CD4-positive, alpha-beta T cell (primary cell): ENCODE measurements at regions of chr14 and their contacts with region 1.

Region 1: DNA sequence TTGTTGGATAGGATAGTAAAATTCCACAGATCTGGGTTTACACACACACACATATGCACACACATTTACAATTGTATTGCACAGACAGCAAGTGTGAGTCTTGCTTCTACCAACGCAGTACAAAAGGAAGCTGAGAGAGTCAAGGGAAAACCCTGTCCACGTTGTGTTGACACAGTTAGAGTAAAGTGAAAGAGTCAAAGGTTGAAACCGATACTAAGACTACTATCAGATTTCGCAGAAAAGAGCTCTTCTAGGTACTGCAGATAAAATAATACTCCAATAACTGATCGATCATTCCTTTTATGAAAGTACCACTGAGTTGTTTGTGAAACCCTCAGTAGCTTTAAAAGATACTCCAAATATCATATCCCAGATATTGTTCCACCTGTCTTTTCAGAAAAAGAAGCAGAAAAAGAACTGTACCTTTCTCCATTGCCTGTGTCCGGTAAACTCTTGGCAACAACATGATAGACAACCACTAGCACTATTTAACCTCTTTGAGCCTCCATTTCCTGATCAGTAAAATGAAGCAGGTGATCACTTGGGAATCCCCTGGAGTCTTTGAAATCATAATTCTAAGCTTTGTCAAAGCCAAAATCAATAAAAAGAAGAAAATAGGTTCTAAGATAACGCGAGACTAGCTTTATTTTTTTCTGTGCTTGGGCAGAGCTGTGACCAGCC is 224.6 kb upstream of the FOXN3 start:
- DNase-seq: peak in 4 of 14 experiments; percentile 27 to 73 (median 70)
- ATAC-seq: peak; percentile 83
- H3K4me3 ChIP-seq: peak overlapping the region; percentile 24
- H3K4me3 Mint-ChIP-seq: peak overlapping the region; percentile 72
- H3K27ac ChIP-seq: peak overlapping the region; percentile 25 to 80
- H3K27ac Mint-ChIP-seq: peak overlapping the region; percentile 94
- H3K4me1 ChIP-seq: peaks cover 13% of the 10 kb centered on the region
- H3K4me1 Mint-ChIP-seq: peaks cover 59% of the 10 kb centered on the region
- H3K27me3 ChIP-seq: no peaks in the 10 kb centered on the region
- H3K27me3 Mint-ChIP-seq: no peaks in the 10 kb centered on the region
- CTCF ChIP-seq: no peak

Region 2: GRCh38 chr14:88729159-88729558 is 912.5 kb before region 1 on chr14:
- CTCF ChIA-PET with region 1: no interaction called
- POLR2A ChIA-PET with region 1: no interaction called
- intact Hi-C with region 1: no loop called
- DNase-seq: no peak
- ATAC-seq: no peak
- H3K4me3 ChIP-seq: no peak overlapping the region
- H3K4me3 Mint-ChIP-seq: no peak overlapping the region
- H3K27ac ChIP-seq: no peak overlapping the region
- H3K27ac Mint-ChIP-seq: no peak overlapping the region
- H3K4me1 ChIP-seq: no peaks in the 10 kb centered on the region
- H3K4me1 Mint-ChIP-seq: no peaks in the 10 kb centered on the region
- H3K27me3 ChIP-seq: no peaks in the 10 kb centered on the region
- H3K27me3 Mint-ChIP-seq: no peaks in the 10 kb centered on the region
- CTCF ChIP-seq: no peak

Region 3: GRCh38 chr14:89406941-89407340 is 234.7 kb before region 1 on chr14:
- CTCF ChIA-PET with region 1: no interaction called
- POLR2A ChIA-PET with region 1: no interaction called
- intact Hi-C with region 1: no loop called
- DNase-seq: no peak
- ATAC-seq: no peak
- H3K4me3 ChIP-seq: no peak overlapping the region
- H3K4me3 Mint-ChIP-seq: peak overlapping the region; percentile 3
- H3K27ac ChIP-seq: no peak overlapping the region
- H3K27ac Mint-ChIP-seq: peak overlapping the region; percentile 56
- H3K4me1 ChIP-seq: peaks cover 42% of the 10 kb centered on the region
- H3K4me1 Mint-ChIP-seq: peaks cover 81% of the 10 kb centered on the region
- H3K27me3 ChIP-seq: no peaks in the 10 kb centered on the region
- H3K27me3 Mint-ChIP-seq: no peaks in the 10 kb centered on the region
- CTCF ChIP-seq: no peak

Region 4: DNA sequence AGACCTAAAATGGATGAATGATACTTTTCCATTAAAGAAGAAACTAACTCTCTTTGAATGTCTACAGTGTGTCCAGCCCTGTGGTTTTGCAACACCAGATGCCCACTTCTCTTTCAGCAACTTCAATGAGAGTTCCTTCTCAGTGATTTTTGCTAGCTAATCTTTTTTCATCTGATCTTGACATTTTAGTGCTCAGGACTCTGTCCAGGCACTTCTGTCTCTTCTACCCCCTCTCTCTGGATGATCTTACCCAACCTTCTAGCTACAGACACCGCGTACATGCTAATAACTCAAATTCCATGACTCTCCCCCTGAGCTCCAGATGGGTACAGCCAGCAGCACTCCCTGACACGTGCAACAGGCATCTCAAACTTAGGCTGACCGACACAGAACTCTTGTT is 63.5 kb before region 1 on chr14:
- CTCF ChIA-PET with region 1: no interaction called
- POLR2A ChIA-PET with region 1: no interaction called
- intact Hi-C with region 1: no loop called
- DNase-seq: no peak
- ATAC-seq: no peak
- H3K4me3 ChIP-seq: no peak overlapping the region
- H3K4me3 Mint-ChIP-seq: no peak overlapping the region
- H3K27ac ChIP-seq: no peak overlapping the region
- H3K27ac Mint-ChIP-seq: no peak overlapping the region
- H3K4me1 ChIP-seq: peaks cover 16% of the 10 kb centered on the region
- H3K4me1 Mint-ChIP-seq: peaks cover 73% of the 10 kb centered on the region
- H3K27me3 ChIP-seq: no peaks in the 10 kb centered on the region
- H3K27me3 Mint-ChIP-seq: no peaks in the 10 kb centered on the region
- CTCF ChIP-seq: no peak

Region 5: GRCh38 chr14:89681086-89682018 is 39.7 kb after region 1 on chr14:
- CTCF ChIA-PET with region 1: no interaction called
- POLR2A ChIA-PET with region 1: interaction called, 11 read pairs
- intact Hi-C with region 1: no loop called
- DNase-seq: peak in 5 of 14 experiments; percentile 9 to 71 (median 66)
- ATAC-seq: peak; percentile 76
- H3K4me3 ChIP-seq: peak overlapping the region; percentile 26
- H3K4me3 Mint-ChIP-seq: peak overlapping the region; percentile 81
- H3K27ac ChIP-seq: peak overlapping the region; percentile 53 to 62
- H3K27ac Mint-ChIP-seq: peak overlapping the region; percentile 92
- H3K4me1 ChIP-seq: peaks cover 30% of the 10 kb centered on the region
- H3K4me1 Mint-ChIP-seq: peaks cover 47% of the 10 kb centered on the region
- H3K27me3 ChIP-seq: no peaks in the 10 kb centered on the region
- H3K27me3 Mint-ChIP-seq: no peaks in the 10 kb centered on the region
- CTCF ChIP-seq: no peak